ENCODE measurements at regions of chr10 and their contacts with region 1.

Region 1: GRCh38 chr10:5873515-5873995 is 16.1 kb downstream of the ANKRD16 start:
- DNase-seq: peak; percentile 38 to 63
- H3K4me3 ChIP-seq: no peak overlapping the region
- H3K27ac ChIP-seq: no peak overlapping the region
- H3K4me1 ChIP-seq: no peaks in the 10 kb centered on the region
- H3K27me3 ChIP-seq: no peaks in the 10 kb centered on the region
- CTCF ChIP-seq: peak; percentile 78

Region 2: GRCh38 chr10:4819707-4820106 is 1053.8 kb before region 1 on chr10:
- CTCF ChIA-PET with region 1: interaction called, 10 read pairs
- POLR2A ChIA-PET with region 1: no interaction called
- intact Hi-C with region 1: no loop called
- DNase-seq: no peak
- H3K4me3 ChIP-seq: no peak overlapping the region
- H3K27ac ChIP-seq: no peak overlapping the region
- H3K4me1 ChIP-seq: no peaks in the 10 kb centered on the region; the same call in 1 of the 2 replicates
- H3K27me3 ChIP-seq: no peaks in the 10 kb centered on the region
- CTCF ChIP-seq: no peak

Region 3: DNA sequence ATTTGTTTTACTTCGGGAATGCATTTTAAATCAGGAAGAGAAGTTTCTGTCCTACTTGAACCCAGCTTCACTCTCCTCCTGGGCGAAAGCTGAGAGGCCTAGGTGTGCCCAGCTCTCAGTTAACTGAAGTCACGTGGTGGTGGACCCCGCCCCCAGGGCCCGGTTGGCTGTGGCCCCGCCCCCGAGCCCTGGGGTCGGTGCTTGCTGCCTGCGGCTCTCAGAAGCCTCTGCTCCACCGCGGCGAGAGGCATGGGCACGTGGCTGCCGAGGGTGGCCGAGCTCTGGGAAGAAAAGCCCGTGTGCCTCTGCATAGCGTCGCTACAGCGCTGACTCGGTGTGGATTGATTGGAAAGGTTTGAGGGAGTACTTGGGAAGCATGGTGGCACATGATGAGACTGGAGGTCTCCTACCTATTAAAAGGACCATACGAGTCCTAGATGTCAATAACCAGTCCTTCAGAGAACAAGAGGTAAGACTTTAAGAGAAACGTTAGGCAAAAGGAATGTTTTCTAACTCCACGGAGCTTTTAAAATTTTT is 427.1 kb before region 1 on chr10:
- CTCF ChIA-PET with region 1: no interaction called
- POLR2A ChIA-PET with region 1: no interaction called
- intact Hi-C with region 1: loop called (anchors 5 kb)
- DNase-seq: peak; percentile 87 to 95
- H3K4me3 ChIP-seq: peak overlapping the region; percentile 91
- H3K27ac ChIP-seq: peak overlapping the region; percentile 95
- H3K4me1 ChIP-seq: peaks cover 38% of the 10 kb centered on the region
- H3K27me3 ChIP-seq: no peaks in the 10 kb centered on the region
- CTCF ChIP-seq: no peak

Region 4: GRCh38 chr10:5645375-5645774 is 228.2 kb before region 1 on chr10:
- CTCF ChIA-PET with region 1: no interaction called
- POLR2A ChIA-PET with region 1: no interaction called
- intact Hi-C with region 1: no loop called
- DNase-seq: no peak
- H3K4me3 ChIP-seq: no peak overlapping the region
- H3K27ac ChIP-seq: no peak overlapping the region
- H3K4me1 ChIP-seq: no peaks in the 10 kb centered on the region
- H3K27me3 ChIP-seq: no peaks in the 10 kb centered on the region
- CTCF ChIP-seq: no peak

Region 5: DNA sequence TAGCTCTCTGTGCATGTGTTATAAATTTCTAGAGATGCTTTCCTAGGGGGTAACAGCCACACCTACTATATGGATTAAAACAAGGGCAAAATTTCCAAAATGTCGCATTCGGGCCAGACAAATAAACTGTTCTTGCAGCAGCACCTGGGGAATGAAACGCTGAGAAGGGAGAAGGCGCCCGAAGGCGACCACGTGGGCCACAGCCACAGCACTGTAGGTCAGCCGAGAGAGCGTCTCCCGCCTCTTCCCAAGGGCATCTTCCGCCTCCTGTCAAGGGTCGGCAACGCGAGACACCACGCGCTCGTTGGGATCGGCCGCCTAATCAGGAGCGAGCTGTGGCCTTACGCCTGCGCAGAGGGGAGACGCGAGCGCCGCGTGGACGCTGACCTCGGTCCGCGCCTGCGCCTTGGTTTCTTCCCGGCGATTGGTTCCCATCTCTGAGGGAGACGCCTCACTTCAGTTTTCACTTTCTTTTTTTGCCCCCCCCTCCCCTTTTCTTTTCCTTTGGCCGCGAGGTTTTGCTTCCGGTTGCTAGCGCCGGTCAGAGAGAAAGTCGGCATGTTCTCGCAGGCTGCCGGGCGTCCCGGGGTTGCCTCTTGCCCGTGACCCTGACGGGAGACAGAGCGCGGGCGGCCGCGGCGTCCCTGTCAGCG is 189.1 kb before region 1 on chr10 and contains the start of gene TASOR2:
- CTCF ChIA-PET with region 1: no interaction called
- POLR2A ChIA-PET with region 1: no interaction called
- intact Hi-C with region 1: loop called (anchors 10 kb)
- DNase-seq: peak; percentile 85 to 97
- H3K4me3 ChIP-seq: peak within 1 kb of the TSS; percentile 92
- H3K27ac ChIP-seq: peak within 1 kb of the TSS; percentile 53
- H3K4me1 ChIP-seq: no peaks in the 10 kb centered on the region; the same call in 1 of the 2 replicates
- H3K27me3 ChIP-seq: no peaks in the 10 kb centered on the region
- CTCF ChIP-seq: no peak
- total RNA-seq, gene TASOR2: 41.8 and 60.7 TPM in 2 replicates

Region 6: DNA sequence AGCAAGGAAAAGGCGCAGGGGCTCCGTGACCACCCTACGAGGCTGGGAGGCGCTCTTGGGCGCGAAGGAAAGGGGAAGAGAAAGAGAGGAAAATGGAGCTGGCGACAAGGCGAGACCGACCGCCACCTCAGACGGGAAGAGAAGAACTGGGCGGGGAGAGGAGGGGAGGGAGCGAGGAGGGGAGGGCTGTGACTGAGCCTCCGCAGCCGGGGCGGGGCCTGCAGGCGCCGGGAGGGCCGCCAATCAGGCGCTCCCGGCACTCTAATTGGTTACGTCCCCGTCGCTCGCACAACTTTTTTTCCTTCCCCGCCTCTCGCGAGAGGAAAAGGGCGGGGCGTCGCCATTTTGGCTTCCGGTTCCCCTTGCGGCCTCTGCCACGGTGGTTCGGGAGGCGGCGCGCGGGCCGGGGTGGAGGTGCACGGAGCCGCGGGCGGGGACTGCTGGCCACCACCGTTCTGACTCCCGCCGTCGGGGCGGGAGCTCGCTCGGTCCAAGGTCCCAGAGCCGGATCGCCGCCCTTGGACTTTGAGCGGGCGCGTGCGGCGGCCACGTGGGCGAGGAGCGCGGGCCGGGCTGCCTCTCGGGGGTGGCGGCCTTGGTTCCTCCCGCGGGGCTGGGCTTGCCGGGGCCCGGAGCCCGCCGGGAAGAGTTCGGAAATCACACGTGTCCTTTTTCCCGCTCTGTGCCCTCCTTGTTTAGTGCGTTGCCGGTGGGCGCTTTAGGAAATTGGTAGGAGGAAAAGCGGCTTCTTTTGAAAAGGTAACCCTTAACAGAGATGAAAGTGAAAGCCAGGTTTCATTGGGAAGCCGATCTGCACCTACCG is 60.1 kb before region 1 on chr10 and contains the start of gene GDI2:
- CTCF ChIA-PET with region 1: no interaction called
- POLR2A ChIA-PET with region 1: no interaction called
- intact Hi-C with region 1: loop called (anchors 1 kb)
- DNase-seq: peak; percentile 81 to 96
- H3K4me3 ChIP-seq: peak within 1 kb of the TSS; percentile 99
- H3K27ac ChIP-seq: peak within 1 kb of the TSS; percentile 94
- H3K4me1 ChIP-seq: peaks cover 25% of the 10 kb centered on the region
- H3K27me3 ChIP-seq: no peaks in the 10 kb centered on the region
- CTCF ChIP-seq: no peak
- total RNA-seq, gene GDI2: 152 and 196 TPM in 2 replicates

Region 7: DNA sequence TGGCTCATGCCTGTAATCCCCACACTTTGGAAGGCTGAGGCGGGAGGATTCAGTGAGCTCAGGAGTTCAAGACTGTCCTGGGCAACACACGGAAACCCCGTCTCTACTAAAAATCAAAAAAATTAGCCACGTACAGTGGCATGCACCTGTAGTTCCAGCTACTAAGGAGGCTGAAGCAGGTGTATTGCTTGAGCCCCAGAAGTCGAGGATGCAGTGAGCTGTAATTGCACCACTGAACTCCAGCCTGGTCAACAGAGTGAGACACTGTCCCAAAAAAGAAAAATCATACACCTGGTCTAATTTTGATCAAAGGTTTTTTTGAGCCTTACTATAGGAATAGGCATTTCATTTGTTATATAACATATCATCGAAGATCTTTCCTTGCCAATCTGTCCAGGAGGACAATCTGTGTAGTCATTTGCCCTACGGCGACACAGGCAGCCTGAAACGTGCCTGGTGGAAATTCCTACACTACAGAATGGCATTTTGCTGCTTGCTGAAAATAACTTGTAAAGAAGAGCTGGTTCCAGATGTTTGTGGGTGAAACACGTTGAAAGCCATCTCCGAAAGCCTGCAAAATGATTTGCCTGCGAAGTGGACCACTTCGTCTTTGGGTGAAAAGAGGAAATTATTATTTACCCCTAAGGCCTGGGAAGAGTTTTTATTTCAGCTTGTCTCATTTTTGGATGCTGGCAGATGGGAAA is 29.1 kb before region 1 on chr10:
- CTCF ChIA-PET with region 1: no interaction called
- POLR2A ChIA-PET with region 1: interaction called, 12 read pairs
- intact Hi-C with region 1: no loop called
- DNase-seq: no peak
- H3K4me3 ChIP-seq: no peak overlapping the region
- H3K27ac ChIP-seq: no peak overlapping the region
- H3K4me1 ChIP-seq: no peaks in the 10 kb centered on the region
- H3K27me3 ChIP-seq: no peaks in the 10 kb centered on the region
- CTCF ChIP-seq: no peak

Region 8: DNA sequence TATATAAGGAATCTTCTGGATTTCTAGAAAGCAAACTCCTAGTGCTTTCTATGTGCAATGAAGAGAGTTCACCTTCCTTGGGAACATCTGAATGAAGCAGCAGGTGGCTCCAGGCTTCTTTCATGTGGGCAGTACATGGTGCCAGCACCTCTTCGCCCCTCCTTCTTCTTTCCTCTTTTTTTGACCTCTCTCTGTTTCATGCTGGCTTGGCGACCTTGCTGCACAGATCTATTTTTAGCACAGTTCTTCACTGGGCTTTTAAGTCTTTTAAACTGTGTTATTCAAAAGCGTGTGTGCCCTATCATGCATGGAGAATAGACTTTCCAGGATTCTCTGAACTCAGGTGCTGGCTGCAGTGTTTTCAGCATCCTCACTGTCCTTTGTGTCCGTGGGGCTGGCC is 1106.8 kb after region 1 on chr10:
- CTCF ChIA-PET with region 1: no interaction called
- POLR2A ChIA-PET with region 1: no interaction called
- intact Hi-C with region 1: no loop called
- DNase-seq: no peak
- H3K4me3 ChIP-seq: no peak overlapping the region
- H3K27ac ChIP-seq: no peak overlapping the region
- H3K4me1 ChIP-seq: no peaks in the 10 kb centered on the region
- H3K27me3 ChIP-seq: 0 out of 2 replicates have a peak, but pooled peaks cover 9% of the 10 kb centered on the region
- CTCF ChIP-seq: no peak